GM18951 (cell line): ENCODE measurements at regions of chrX and their contacts with region 1.

Region 1: DNA sequence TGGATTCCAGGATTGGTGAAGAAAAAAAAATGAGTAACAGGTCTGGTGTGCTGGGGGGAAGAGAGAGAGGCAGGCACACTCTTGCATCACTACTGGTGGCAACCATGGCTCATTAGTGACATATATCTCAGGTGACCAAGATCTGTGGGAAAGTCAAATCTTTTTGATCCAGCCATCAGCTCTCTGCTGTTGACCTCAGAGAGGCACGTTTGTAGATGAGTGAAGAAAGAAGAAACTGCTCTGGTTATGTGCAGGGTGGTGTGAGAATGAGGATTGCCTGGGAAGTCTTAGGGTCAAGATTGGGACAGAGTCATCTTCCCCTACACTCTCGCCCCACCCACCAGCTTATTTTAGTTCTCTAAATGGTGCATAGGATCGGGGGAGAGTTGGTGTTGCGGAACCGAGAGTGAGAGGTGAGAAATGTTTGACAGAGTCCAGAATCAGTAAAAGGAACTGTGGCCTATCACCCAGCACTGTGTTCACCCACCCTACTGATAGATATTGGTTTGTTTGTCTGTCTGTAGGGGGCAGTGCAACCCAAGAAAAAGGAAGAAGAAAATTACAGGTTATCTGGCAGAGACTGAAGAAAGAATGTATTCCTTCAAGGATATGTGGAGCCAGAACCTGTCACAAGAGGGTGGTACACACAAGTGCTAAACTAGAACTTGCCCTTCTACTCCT is 21.9 kb downstream of the ARMCX6 start:
- POLR2A ChIP-seq: no peak

Region 2: DNA sequence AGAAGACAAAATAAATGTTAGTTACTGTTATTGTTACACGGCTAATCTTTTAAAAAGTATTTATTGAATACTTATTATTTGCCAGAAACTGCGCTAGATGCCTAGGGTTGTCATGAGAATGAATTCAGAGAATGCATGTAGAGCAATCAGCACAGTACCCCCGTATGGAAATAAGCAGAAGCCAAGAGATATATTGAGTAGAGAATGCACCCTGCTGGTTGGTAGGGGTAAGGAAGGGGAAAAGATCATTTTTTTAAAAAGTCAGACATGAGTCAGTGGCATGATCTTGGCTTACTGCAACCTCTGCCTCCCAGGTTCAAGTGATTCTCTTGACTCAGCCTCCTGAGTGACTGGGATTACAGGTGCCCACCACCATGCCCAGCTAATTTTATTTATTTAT is 389.4 kb before region 1 on chrX:
- in situ Hi-C with region 1: no loop called
- POLR2A ChIP-seq: no peak

Region 3: DNA sequence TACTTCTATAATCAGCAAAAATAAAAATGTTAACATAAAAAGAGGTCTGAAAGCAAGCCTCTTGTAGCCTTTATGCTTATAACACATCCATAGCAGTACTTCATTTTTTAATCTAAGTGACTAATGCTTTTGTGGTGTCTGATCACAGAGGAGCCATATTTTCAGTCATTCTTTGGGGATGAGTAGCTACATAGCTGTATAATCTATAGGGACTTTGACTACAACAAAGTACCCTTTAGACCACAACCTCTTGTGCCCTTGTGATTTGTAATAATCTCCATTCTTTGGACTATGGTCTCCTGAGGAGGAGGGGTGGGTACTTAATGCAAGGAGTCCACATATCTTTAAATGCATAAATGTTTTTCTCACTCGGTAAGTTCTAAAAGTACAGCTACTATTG is 366.7 kb before region 1 on chrX:
- in situ Hi-C with region 1: no loop called
- POLR2A ChIP-seq: no peak

Region 4: DNA sequence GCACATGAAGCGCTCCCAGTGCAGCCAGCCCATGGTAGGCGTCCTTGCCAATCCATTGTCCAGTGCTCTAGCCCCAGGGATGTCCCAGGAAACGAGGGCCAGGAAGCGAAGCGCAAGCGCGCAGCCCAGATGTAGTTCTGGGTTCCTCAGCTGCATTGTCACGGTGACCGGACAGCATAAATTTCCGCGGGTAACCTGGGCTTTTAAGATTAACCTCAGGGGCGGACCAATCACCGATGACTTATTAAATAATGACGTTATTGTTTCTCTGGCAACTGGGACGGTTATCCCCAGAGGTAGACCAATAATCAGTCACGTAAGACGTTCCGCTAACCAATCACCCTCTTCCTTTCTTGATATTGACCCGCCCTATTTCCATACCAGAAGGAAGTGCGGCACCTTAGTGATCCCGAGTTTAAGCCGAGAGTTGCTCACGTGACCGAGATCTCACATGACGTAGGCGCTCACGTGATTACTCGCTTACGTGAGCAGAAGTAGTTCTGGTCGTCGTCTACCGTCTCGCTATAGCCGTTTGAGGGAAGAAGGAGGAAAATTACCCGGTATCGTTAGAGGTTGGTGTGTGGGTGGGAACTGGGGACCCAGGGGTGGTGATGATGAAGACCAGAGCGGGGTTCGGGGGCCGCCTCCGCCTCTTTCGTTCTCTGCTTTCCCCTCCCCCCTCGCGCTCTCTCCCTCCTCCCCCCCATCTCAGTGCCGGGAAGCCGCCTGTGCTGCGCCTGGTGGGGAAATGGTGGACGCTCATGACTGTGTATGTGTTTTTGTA is 187.9 kb before region 1 on chrX and contains the starts of genes GLA and HNRNPH2:
- in situ Hi-C with region 1: loop called (anchors 25 kb)
- POLR2A ChIP-seq: peak; percentile 60

Region 5: GRCh38 chrX:101539116-101539515 is 56.8 kb before region 1 on chrX:
- in situ Hi-C with region 1: no loop called
- POLR2A ChIP-seq: no peak

Region 6: GRCh38 chrX:101799387-101799786 is 203.5 kb after region 1 on chrX:
- in situ Hi-C with region 1: loop called (anchors 10 kb)
- POLR2A ChIP-seq: no peak